ENCODE measurements at regions of chr12 and their contacts with region 1.

Region 1: GRCh38 chr12:57744777-57745484 is at the start of gene TSPAN31:
- DNase-seq: peak; percentile 99
- H3K4me3 Mint-ChIP-seq: peak within 1 kb of the TSS; percentile 85
- H3K27ac Mint-ChIP-seq: peak within 1 kb of the TSS; percentile 94
- H3K4me1 Mint-ChIP-seq: peaks cover 40% of the 10 kb centered on the region
- H3K27me3 Mint-ChIP-seq: no peaks in the 10 kb centered on the region
- total RNA-seq, gene TSPAN31: 6.4 to 7.7 TPM

Region 2: GRCh38 chr12:57546438-57547383 is 198.2 kb before region 1 on chr12 and contains the start of gene DCTN2:
- CTCF ChIA-PET with region 1: no interaction called
- intact Hi-C with region 1: loop called (anchors 1 kb)
- DNase-seq: peak; percentile 98
- H3K4me3 Mint-ChIP-seq: peak within 1 kb of the TSS; percentile 91
- H3K27ac Mint-ChIP-seq: peak within 1 kb of the TSS; percentile 82
- H3K4me1 Mint-ChIP-seq: peaks cover 47% of the 10 kb centered on the region
- H3K27me3 Mint-ChIP-seq: no peaks in the 10 kb centered on the region
- total RNA-seq, gene DCTN2: 65.1 to 71.7 TPM